Tibial artery (tissue), 4 donors: ENCODE measurements at regions of chr4 and their contacts with region 1.

Region 1: GRCh38 chr4:121072224-121073003 is at the start of gene NDNF:
- DNase-seq: peak; percentile 54 to 74
- H3K4me3 ChIP-seq: peak within 1 kb of the TSS; percentile 59 to 61
- H3K27ac ChIP-seq: peak within 1 kb of the TSS; percentile 47 to 56
- H3K4me1 ChIP-seq: peaks cover 0 to 23% (median 13%) of the 10 kb centered on the region in 4 donors
- H3K27me3 ChIP-seq: peaks cover 0 to 2% of the 10 kb centered on the region in 2 donors
- CTCF ChIP-seq: no peak

Region 2: DNA sequence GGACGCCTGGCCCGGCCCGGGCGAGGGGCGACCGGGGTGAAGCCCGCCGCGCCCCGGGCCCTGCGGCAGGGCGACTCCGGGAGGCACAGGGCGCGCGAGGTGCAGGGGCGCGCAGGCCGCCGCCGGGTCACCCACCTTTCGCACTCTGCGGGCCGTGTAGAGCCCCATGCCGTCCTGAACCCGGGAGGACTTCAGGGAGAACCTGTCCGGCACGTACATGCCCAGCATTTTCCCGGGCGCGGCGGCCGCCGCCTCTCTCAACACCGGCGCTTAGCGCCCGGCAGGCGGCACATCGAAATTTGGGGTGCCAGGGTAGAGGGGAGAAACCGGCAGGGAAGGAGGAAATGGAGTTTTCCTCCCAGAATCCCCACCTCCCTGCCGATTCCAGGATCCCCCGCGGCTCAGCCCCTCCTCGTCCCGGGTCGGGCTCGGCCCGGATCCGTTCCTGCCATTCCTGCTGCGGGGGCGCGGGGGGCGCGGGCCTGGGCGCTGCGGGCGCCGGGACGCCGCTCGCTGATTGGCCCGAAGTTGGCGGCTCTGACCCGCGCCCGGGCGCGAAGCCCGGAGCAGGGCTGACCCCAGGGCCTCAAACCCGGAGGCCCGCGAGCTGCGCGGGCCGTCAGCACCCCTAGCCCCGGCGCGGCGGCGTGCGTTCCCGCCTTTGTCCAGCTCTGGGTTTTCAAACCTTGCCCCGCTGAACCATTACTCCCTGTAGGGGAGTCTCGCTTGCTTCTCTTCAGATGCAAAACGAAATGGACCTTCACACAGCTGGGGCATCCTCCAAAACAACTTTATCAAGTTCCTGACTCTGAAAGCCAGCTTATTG is 149.8 kb before region 1 on chr4 and contains the start of gene PRDM5:
- intact Hi-C with region 1: loop called (anchors 5 kb)
- DNase-seq: peak; percentile 29 to 74
- H3K4me3 ChIP-seq: peak within 1 kb of the TSS; percentile 78 to 81
- H3K27ac ChIP-seq: peak within 1 kb of the TSS; percentile 89 to 92
- H3K4me1 ChIP-seq: peaks cover 0 to 22% (median 0%) of the 10 kb centered on the region in 4 donors
- H3K27me3 ChIP-seq: no peaks in the 10 kb centered on the region
- CTCF ChIP-seq: no peak